ENCODE measurements at regions of chr5 and their contacts with region 1.

Region 1: GRCh38 chr5:132729896-132730295 is 7.5 kb downstream of the KIF3A start:
- DNase-seq: no peak
- H3K4me3 Mint-ChIP-seq: no peak overlapping the region
- H3K27ac Mint-ChIP-seq: no peak overlapping the region
- H3K4me1 Mint-ChIP-seq: no peaks in the 10 kb centered on the region
- H3K27me3 Mint-ChIP-seq: no peaks in the 10 kb centered on the region

Region 2: DNA sequence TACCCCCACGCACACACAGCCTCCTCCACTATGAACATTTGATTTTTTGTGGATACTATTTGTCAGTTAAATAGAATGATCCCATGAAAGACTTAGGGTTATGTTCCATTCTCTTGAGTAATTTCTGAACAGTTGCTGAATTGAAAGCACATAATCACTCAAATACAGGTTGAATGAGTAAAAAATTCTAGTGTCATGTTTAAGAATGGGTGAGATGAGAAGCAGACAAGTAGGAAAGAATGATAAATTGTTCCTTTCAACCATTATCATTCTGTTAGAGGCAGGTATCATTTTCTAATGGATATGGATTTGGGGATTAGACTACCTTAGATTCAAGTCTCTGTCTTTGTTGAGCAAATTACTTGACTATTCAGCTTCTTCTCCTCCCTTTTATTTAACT is 153.8 kb before region 1 on chr5:
- CTCF ChIA-PET with region 1: no interaction called
- DNase-seq: no peak
- H3K4me3 Mint-ChIP-seq: no peak overlapping the region
- H3K27ac Mint-ChIP-seq: no peak overlapping the region
- H3K4me1 Mint-ChIP-seq: no peaks in the 10 kb centered on the region
- H3K27me3 Mint-ChIP-seq: no peaks in the 10 kb centered on the region

Region 3: DNA sequence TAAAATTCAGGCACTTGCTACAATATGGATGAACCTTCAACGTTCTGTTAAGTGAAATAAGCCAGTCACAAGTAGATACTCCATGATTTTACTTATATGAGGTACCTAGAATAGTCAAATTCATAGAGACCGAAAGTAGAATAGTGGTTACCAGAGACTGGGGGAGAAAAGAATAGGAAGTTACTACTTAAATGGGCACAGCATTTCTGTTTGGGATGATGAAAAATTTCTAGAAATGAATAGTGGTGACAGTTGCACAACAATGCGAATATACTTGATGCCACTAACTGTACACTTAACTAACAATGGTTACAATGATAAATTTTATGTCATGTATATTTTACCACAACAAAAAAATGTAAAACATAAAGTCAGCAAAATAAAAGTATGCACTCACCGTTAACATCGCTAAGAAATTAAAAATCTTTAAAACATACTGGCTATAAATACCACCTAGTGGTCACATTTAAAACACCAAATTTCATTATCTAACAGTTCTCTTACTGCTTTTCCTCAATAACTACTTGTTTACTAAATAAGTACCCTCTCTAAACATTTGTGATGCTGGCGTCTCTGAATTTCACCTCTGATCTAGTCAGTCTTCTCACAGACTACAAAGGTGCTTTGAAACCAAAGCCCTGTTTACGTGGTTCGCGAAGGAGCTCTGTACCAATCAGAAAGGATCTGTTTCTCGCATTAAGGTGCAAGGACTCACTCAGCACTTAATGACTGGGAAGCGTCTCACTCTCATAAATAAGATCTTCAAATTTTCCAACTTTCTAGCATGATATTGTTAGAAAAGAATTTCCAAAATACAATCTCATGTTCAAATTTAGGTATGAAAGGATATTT is 15.2 kb before region 1 on chr5:
- CTCF ChIA-PET with region 1: interaction called, 12 read pairs
- DNase-seq: no peak
- H3K4me3 Mint-ChIP-seq: no peak overlapping the region
- H3K27ac Mint-ChIP-seq: no peak overlapping the region
- H3K4me1 Mint-ChIP-seq: peaks cover 12% of the 10 kb centered on the region
- H3K27me3 Mint-ChIP-seq: no peaks in the 10 kb centered on the region

Region 4: GRCh38 chr5:132905867-132906295 is 176.0 kb after region 1 on chr5:
- CTCF ChIA-PET with region 1: no interaction called
- DNase-seq: no peak
- H3K4me3 Mint-ChIP-seq: no peak overlapping the region
- H3K27ac Mint-ChIP-seq: no peak overlapping the region
- H3K4me1 Mint-ChIP-seq: no peaks in the 10 kb centered on the region
- H3K27me3 Mint-ChIP-seq: no peaks in the 10 kb centered on the region

Region 5: DNA sequence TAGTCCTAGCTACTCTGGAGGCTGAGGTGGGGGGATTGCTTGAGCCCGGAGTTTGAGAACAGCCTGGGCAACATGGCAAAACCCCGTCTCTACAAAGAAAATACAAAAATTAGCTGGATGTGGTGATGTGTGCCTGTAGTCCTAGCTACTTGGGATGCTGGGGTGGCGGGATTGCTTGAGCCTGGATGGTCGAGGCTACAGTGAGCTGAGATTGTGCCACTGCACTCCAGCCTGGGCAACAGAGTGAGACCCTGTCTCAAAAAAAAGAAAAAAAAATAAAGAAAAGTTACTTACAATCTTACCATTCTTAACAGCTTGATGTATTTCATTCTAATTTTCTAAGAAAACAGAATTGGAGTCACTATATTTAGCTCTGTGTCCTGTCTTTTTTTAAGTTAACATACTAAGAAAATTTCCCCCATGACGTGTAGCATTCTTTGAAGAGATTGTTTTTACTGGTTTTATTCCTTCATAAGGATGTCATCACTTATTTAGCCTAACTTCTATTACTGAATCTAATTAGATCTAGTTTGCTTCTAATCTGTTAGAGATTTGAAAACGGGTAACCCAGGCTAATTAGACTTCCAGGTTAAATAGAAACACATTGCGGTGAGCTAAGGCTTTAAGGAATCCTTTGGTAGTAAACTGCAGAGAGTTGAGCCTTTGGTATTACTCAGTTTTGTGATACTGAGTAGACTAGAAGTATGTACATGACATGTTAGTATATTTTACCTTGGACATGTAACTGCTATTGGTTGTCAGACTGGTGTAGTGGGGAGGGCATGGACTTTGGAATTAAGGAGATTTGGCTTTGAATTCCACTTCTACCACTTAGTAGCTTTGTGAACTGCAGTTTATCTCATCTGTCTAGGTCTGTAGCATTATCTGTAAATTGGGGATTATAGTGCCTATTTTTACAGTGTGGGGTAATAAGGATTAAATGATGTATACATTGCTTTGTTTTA is 346.0 kb after region 1 on chr5:
- CTCF ChIA-PET with region 1: no interaction called
- DNase-seq: no peak
- H3K4me3 Mint-ChIP-seq: no peak overlapping the region
- H3K27ac Mint-ChIP-seq: peak overlapping the region; percentile 19
- H3K4me1 Mint-ChIP-seq: peaks cover 10% of the 10 kb centered on the region
- H3K27me3 Mint-ChIP-seq: no peaks in the 10 kb centered on the region

Measured in activated naive CD4-positive, alpha-beta T cell treated with anti-CD3 and anti-CD28 coated beads, Interleukin-2, amount 10 ng/mL, durations not matched to agents 7 days and 5 days (primary cell).